ENCODE measurements at regions of chr12 and their contacts with region 1.

Region 1: GRCh38 chr12:29164477-29165393 is 15.7 kb downstream of the FAR2 start:
- DNase-seq: peak; percentile 91
- ATAC-seq: peak; percentile 97
- H3K4me3 ChIP-seq: no peak overlapping the region; the same call in 1 of the 2 replicates
- H3K27ac ChIP-seq: peak overlapping the region; percentile 57
- H3K4me1 ChIP-seq: peaks cover 30% of the 10 kb centered on the region
- H3K27me3 ChIP-seq: no peaks in the 10 kb centered on the region
- CTCF ChIP-seq: no peak

Region 2: GRCh38 chr12:28083840-28084678 is 1080.7 kb before region 1 on chr12:
- CTCF ChIA-PET with region 1: no interaction called
- POLR2A ChIA-PET with region 1: no interaction called
- intact Hi-C with region 1: no loop called
- DNase-seq: no peak
- ATAC-seq: no peak
- H3K4me3 ChIP-seq: no peak overlapping the region
- H3K27ac ChIP-seq: no peak overlapping the region
- H3K4me1 ChIP-seq: peaks cover 6% of the 10 kb centered on the region
- H3K27me3 ChIP-seq: no peaks in the 10 kb centered on the region
- CTCF ChIP-seq: no peak

Region 3: DNA sequence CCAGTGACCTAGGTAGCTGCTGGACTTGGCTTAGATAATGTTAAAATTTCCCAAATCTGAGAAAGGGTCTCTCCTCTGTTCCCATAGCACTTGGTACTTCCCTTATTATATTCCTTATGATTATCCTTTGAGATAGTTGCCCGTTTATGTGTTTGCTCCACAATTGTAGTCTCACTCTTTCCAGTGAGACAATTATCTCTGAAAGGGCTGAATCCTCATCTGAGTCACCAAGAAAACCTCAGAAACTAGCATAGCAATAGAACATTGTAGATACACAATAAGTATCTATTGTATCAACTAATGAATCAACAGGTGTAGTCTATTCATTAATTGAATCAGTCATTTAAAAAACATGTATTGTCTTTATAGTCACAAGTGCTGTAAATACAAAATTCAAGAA is 134.7 kb before region 1 on chr12:
- CTCF ChIA-PET with region 1: no interaction called
- POLR2A ChIA-PET with region 1: no interaction called
- intact Hi-C with region 1: no loop called
- DNase-seq: peak; percentile 37
- ATAC-seq: no peak
- H3K4me3 ChIP-seq: no peak overlapping the region
- H3K27ac ChIP-seq: no peak overlapping the region
- H3K4me1 ChIP-seq: peaks cover 13% of the 10 kb centered on the region
- H3K27me3 ChIP-seq: no peaks in the 10 kb centered on the region
- CTCF ChIP-seq: no peak

Region 4: DNA sequence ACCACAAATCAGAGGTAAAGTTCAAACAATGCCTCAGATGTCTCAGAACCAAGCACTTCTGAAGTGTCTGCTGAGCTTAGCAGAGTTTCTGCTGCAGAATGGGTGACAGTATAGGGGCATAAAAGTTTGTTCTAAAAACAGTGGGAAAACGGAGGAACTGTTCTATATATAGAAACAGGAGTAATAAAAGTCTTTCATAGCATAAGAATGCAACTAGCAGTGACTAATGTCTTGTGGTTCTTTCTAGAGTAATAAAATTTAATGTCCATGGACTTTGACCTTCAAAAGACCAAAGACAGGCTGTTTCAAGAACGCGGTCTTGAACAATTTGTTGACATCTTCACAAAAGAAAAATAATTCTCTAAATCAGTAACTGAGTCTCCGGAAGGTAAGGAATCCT is 123.1 kb before region 1 on chr12:
- CTCF ChIA-PET with region 1: no interaction called
- POLR2A ChIA-PET with region 1: no interaction called
- intact Hi-C with region 1: loop called (anchors 2 kb)
- DNase-seq: peak; percentile 99
- ATAC-seq: peak; percentile 85
- H3K4me3 ChIP-seq: peak overlapping the region; percentile 34; the same call in 1 of the 2 replicates
- H3K27ac ChIP-seq: peak overlapping the region; percentile 88
- H3K4me1 ChIP-seq: peaks cover 49% of the 10 kb centered on the region
- H3K27me3 ChIP-seq: no peaks in the 10 kb centered on the region
- CTCF ChIP-seq: no peak

Region 5: DNA sequence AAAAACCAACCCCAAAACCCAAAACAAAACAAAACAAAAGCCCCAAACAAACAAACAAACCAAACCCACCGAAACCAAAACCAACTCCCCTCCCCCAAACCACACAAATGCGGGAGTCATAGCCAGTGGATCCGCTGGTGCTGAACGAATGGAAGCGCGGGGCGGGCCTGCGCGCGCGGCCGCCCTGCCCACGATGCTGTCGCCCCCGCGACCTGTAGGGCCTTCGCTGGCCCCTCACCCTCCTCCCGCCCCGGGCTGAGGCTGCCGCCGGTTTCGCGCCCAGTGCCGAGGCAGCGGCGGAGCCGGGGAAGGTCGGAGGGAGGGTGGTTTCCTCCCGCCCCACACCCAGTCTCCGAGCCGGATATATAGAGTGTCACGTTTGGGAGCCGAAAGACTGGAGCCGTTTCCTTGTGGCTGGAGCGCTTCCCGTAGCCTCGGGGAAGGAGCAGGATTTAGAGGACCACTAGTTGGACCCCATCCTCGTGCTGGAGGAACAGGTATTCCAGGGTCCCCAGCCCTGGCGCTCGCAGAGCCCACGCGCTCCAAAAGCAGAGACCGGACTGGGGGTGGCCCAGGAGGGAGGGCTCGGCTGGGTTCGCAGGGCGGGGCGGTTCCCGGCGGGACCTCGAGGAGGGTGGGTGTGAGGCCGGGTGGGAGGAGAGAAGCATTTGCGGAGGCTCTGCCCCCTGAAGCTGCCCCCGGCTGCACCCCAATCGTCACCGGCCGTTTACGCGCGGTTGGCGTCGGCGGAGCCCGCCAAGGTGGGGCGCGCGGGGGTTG is 15.6 kb before region 1 on chr12 and contains the start of gene FAR2:
- CTCF ChIA-PET with region 1: no interaction called
- POLR2A ChIA-PET with region 1: interaction called, 3 read pairs
- intact Hi-C with region 1: loop called (anchors 1 kb)
- DNase-seq: peak; percentile 69
- ATAC-seq: peak; percentile 77
- H3K4me3 ChIP-seq: peak within 1 kb of the TSS; percentile 81
- H3K27ac ChIP-seq: peak within 1 kb of the TSS; percentile 17
- H3K4me1 ChIP-seq: peaks cover 16% of the 10 kb centered on the region
- H3K27me3 ChIP-seq: no peaks in the 10 kb centered on the region
- CTCF ChIP-seq: no peak; the same call in 1 of the 2 replicates
- total RNA-seq, gene FAR2: 10.2 and 13.5 TPM in 2 replicates

Region 6: GRCh38 chr12:29380536-29381523 is 216.1 kb after region 1 on chr12 and contains the start of gene ERGIC2:
- CTCF ChIA-PET with region 1: no interaction called
- POLR2A ChIA-PET with region 1: no interaction called
- intact Hi-C with region 1: loop called (anchors 1 kb)
- DNase-seq: peak; percentile 100
- ATAC-seq: peak; percentile 94
- H3K4me3 ChIP-seq: peak within 1 kb of the TSS; percentile 77
- H3K27ac ChIP-seq: peak within 1 kb of the TSS; percentile 81
- H3K4me1 ChIP-seq: peaks cover 22% of the 10 kb centered on the region
- H3K27me3 ChIP-seq: no peaks in the 10 kb centered on the region
- CTCF ChIP-seq: no peak
- total RNA-seq, gene ERGIC2: 142 and 184 TPM in 2 replicates

Region 7: DNA sequence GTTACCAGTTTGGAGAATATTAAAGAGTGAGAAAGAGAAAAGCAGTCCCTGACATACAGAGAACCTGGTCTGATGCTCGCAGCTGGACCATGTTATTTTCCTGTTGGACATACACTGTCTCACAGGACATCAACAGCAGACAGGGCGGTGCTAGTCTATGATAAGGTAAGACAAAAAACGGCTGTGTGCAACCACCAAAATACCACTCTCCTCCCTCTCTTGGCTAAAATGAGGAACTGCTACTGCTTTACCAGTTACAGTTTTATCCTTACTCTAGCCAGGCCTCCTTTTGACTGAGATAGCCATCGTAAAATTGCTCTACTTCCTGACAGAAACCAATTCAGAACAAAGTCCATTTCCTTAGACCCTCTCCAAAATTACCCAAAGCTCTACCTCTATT is 263.2 kb after region 1 on chr12:
- CTCF ChIA-PET with region 1: no interaction called
- POLR2A ChIA-PET with region 1: no interaction called
- intact Hi-C with region 1: loop called (anchors 5 kb)
- DNase-seq: peak; percentile 53
- ATAC-seq: peak; percentile 6; the same call in 1 of the 2 replicates
- H3K4me3 ChIP-seq: no peak overlapping the region
- H3K27ac ChIP-seq: peak overlapping the region; percentile 28
- H3K4me1 ChIP-seq: peaks cover 56% of the 10 kb centered on the region
- H3K27me3 ChIP-seq: no peaks in the 10 kb centered on the region
- CTCF ChIP-seq: peak; percentile 56

Measured in PC-3 (cell line).